ENCODE measurements at regions of chrX and their contacts with region 1.

Region 1: DNA sequence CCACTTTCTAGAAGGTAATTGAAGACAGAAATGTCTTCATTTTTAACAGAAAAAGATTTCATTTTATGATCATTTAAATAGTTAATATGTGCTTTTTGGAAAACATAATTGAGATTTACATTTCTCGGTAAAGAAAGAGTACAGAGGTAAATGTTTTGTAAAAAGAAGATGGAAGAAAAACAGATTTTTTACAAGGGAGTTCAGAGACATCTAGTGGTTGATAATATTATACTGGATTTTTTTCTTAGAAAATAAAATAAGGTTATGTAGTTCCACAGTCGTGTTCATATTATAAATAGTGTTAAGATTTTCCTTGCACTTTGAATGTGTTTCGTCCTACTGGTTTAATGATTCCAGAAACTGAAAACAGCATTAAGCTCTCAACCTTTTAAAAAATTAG is 60.6 kb downstream of the SMARCA1 start:
- DNase-seq: no peak
- H3K4me3 ChIP-seq: no peak overlapping the region
- H3K27ac ChIP-seq: no peak overlapping the region
- H3K4me1 ChIP-seq: no peaks in the 10 kb centered on the region
- H3K27me3 ChIP-seq: no peaks in the 10 kb centered on the region
- CTCF ChIP-seq: peak; percentile 49; the same call in 1 of the 2 replicates

Region 2: GRCh38 chrX:129510331-129510730 is 47.6 kb after region 1 on chrX:
- CTCF ChIA-PET with region 1: no interaction called
- POLR2A ChIA-PET with region 1: no interaction called
- intact Hi-C with region 1: loop called (anchors 10 kb)
- DNase-seq: no peak
- H3K4me3 ChIP-seq: no peak overlapping the region
- H3K27ac ChIP-seq: no peak overlapping the region
- H3K4me1 ChIP-seq: no peaks in the 10 kb centered on the region
- H3K27me3 ChIP-seq: no peaks in the 10 kb centered on the region
- CTCF ChIP-seq: no peak